HAP-1 (cell line): ENCODE measurements at regions of chr4 and their contacts with region 1.

Region 1: GRCh38 chr4:95107635-95108034 is 349.9 kb downstream of the BMPR1B start:
- DNase-seq: no peak
- H3K4me3 ChIP-seq: no peak overlapping the region
- H3K4me1 ChIP-seq: no peaks in the 10 kb centered on the region
- H3K27me3 ChIP-seq: no peaks in the 10 kb centered on the region

Region 2: DNA sequence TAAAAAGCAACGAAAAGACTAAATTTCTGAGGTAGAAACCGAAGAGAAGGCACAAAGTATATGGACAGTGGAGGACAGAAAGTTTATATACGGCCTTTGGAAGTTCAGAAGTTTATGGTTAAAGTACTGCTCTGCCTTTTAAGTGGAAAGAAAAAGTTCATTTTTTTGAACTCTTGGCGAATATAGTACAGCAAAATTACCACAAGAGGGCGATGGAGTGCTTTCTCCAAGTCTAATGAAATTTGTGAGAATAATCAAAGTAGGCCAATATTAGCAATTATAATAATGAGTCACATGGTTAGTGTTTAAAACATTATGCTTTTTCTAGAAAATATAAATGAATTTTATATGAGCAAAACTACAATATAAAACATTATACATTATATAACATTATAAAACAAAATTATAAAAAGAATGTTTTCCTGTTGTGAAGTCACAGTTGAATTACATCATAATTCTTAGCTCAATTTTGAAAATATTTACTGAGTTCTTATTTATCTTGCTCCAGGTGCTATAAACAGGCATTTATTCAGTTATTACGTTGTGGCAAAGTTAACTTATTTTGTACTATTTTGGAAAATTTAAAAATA is 486.0 kb before region 1 on chr4:
- in situ Hi-C with region 1: loop called (anchors 10 kb)
- DNase-seq: peak; percentile 39 to 60
- H3K4me3 ChIP-seq: no peak overlapping the region
- H3K4me1 ChIP-seq: peaks cover 4% of the 10 kb centered on the region; the same call in 1 of the 2 replicates
- H3K27me3 ChIP-seq: no peaks in the 10 kb centered on the region

Region 3: DNA sequence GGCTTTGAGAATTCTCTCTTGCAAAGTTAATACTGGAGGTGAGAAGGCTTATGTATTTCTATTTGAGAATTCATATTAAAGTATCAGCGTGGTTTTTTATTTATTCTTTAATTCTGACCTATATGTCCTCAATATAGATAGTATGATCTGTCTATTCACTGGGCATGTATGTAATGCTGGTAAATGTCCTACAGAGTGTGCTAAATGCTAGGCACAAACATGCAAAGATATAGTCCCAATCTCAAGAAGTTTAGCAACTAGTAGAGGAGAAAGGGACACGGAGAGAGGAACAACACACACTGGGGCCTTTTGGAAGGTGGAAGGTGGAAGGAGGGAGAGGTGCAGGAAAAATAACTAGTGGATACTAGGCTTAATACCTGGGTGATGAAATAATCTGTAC is 360.9 kb before region 1 on chr4:
- in situ Hi-C with region 1: no loop called
- DNase-seq: no peak
- H3K4me3 ChIP-seq: no peak overlapping the region
- H3K4me1 ChIP-seq: peaks cover 17% of the 10 kb centered on the region
- H3K27me3 ChIP-seq: no peaks in the 10 kb centered on the region

Region 4: GRCh38 chr4:94788643-94789042 is 319.0 kb before region 1 on chr4:
- in situ Hi-C with region 1: no loop called
- DNase-seq: no peak
- H3K4me3 ChIP-seq: no peak overlapping the region
- H3K4me1 ChIP-seq: peaks cover 20% of the 10 kb centered on the region
- H3K27me3 ChIP-seq: no peaks in the 10 kb centered on the region